WTC11 (cell line): ENCODE measurements at regions of chr1 and their contacts with region 1.

Region 1: DNA sequence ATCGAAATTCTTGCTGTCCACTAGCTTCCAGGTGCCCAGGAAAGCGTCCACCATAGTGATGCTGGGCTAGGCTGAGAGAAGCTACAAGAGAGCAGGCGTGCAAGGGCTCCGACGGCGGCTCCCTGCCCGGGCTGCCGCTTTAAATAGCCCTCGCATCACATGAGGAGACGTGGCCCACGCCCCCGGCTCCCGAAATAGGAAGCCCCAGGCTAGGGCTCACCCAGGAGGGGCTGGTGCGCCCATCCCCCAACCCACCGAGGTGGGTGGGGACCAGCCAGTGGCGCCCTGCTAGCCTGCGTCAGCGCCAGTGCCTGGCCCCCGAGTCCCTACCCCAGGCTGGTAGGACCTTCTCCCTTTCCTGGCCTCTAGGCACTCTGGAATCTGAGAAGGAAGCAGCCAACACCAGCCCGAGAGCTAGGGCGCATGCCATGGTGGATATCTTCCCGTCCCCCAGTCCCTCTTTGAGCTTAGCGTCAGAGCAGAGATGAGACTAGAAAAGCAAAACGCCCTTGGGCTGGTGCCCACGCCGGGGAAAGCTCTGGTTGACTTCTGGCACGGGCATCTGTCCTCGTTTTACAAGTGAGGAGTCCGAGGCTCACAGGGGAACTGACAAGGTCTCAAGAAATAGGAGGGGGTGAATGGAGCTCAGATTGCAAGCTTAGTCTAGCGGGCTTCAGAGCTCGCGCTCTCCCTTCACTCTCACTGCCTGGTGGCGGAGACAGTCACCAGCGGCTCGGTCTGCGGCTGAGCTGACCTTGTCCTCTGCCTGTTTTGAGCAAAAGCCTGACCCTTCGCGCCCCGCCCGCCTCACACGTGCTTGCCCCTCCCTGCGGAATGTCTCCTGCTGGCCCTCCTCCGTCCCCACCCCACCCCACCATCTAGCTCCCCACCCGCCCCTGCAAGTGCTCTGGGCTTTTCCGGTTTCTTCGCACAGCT is at the start of gene FABP3:
- DNase-seq: peak; percentile 95
- ATAC-seq: peak; percentile 72
- H3K4me3 Mint-ChIP-seq: peak within 1 kb of the TSS; percentile 70
- H3K27ac Mint-ChIP-seq: peak within 1 kb of the TSS; percentile 94
- H3K4me1 Mint-ChIP-seq: peaks cover 52% of the 10 kb centered on the region
- H3K27me3 Mint-ChIP-seq: peaks cover 4% of the 10 kb centered on the region
- CTCF ChIP-seq: no peak
- total RNA-seq, gene FABP3: 18.0 to 25.0 TPM (median 19.0 TPM) in 3 replicates

Region 2: GRCh38 chr1:31296486-31297276 is 76.5 kb before region 1 on chr1 and contains the starts of genes SNRNP40 and ZCCHC17:
- CTCF ChIA-PET with region 1: interaction called, 5 read pairs
- POLR2A ChIA-PET with region 1: interaction called, 15 read pairs
- DNase-seq: peak; percentile 95
- ATAC-seq: peak; percentile 98
- H3K4me3 Mint-ChIP-seq: no peak within 1 kb of the TSS
- H3K27ac Mint-ChIP-seq: no peak within 1 kb of the TSS; the same call in 1 of the 2 replicates
- H3K4me1 Mint-ChIP-seq: peaks cover 15% of the 10 kb centered on the region
- H3K27me3 Mint-ChIP-seq: no peaks in the 10 kb centered on the region
- CTCF ChIP-seq: no peak
- total RNA-seq, gene SNRNP40: 102 to 103 TPM (median 103 TPM) in 3 replicates
- total RNA-seq, gene ZCCHC17: 40.6 to 42.0 TPM (median 40.7 TPM) in 3 replicates

Region 3: DNA sequence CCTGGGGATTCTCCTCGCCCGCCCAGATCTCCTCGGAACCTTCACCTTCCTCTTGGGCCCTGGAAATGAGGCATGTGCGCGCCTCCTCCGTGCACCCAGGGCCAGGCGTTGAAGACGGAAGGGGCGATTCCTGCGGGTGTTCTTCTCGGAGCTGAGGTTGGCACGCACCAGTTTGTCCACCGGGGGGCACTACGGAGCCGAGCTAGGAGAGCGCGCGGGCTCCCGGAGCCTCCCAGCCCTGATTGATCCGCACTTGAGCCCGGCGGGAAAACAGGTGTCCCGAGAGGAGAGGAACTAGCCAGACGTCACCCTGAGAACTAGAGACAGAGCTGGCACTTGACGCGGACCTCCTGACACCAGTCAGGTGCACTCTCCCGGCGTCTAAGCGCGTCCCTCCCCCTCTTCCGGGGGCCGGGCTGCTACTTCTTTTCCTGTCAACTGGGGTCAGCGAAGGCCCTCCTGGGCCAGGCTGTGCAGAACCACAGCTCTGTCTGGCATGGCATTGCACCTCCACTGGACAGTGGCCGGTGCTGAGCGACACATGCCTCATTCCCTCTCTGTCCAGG is 21.5 kb after region 1 on chr1:
- CTCF ChIA-PET with region 1: interaction called, 85 read pairs
- POLR2A ChIA-PET with region 1: interaction called, 14 read pairs
- DNase-seq: peak; percentile 96
- ATAC-seq: peak; percentile 95
- H3K4me3 Mint-ChIP-seq: peak overlapping the region; percentile 63
- H3K27ac Mint-ChIP-seq: no peak overlapping the region
- H3K4me1 Mint-ChIP-seq: peaks cover 19% of the 10 kb centered on the region
- H3K27me3 Mint-ChIP-seq: peaks cover 9% of the 10 kb centered on the region
- CTCF ChIP-seq: peak; percentile 72

Region 4: GRCh38 chr1:31413405-31414125 is 40.3 kb after region 1 on chr1:
- CTCF ChIA-PET with region 1: interaction called, 10 read pairs
- POLR2A ChIA-PET with region 1: interaction called, 14 read pairs
- DNase-seq: peak; percentile 55
- ATAC-seq: peak; percentile 25
- H3K4me3 Mint-ChIP-seq: peak overlapping the region; percentile 95
- H3K27ac Mint-ChIP-seq: 0 out of 2 replicates have a peak overlapping the region, but pooled peaks have one; percentile 47
- H3K4me1 Mint-ChIP-seq: peaks cover 37% of the 10 kb centered on the region
- H3K27me3 Mint-ChIP-seq: peaks cover 16% of the 10 kb centered on the region
- CTCF ChIP-seq: no peak